Activated CD4-positive, alpha-beta T cell treated with anti-CD3 and anti-CD28 coated beads for 36 hours (primary cell): ENCODE measurements at regions of chr6 and their contacts with region 1.

Region 1: DNA sequence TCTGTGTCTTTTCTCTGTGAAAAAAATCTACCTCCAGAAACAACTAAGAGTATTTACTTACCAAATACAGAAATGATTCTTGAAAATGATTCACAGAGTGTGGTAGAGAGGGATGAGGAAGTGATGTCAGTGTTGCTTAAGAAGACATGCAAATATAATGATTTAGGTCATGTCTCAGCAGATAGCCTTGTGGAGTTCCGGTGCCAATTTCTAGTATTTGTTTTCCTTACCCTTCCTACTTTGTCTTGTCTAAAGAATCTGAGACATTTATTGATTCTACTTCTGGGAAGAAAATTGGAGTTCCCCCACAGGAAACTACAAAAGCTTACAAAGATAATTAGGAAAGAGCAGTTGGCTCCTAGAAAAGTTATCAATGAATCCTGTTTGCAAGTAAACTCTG is 68.8 kb downstream of the GJA1 start:
- DNase-seq: no peak
- ATAC-seq: peak; percentile 91
- H3K4me3 Mint-ChIP-seq: no peak overlapping the region
- H3K27ac Mint-ChIP-seq: peak overlapping the region; percentile 37
- H3K4me1 Mint-ChIP-seq: peaks cover 12% of the 10 kb centered on the region
- H3K27me3 Mint-ChIP-seq: no peaks in the 10 kb centered on the region

Region 2: GRCh38 chr6:120083186-120083585 is 1421.0 kb before region 1 on chr6:
- CTCF ChIA-PET with region 1: no interaction called
- POLR2A ChIA-PET with region 1: no interaction called
- intact Hi-C with region 1: loop called in 1 of 2 experiments (anchors 5 kb)
- DNase-seq: no peak
- ATAC-seq: no peak
- H3K4me3 Mint-ChIP-seq: no peak overlapping the region
- H3K27ac Mint-ChIP-seq: no peak overlapping the region
- H3K4me1 Mint-ChIP-seq: no peaks in the 10 kb centered on the region
- H3K27me3 Mint-ChIP-seq: no peaks in the 10 kb centered on the region